CD4-positive, alpha-beta memory T cell (primary cell): ENCODE measurements at regions of chr19 and their contacts with region 1.

Region 1: GRCh38 chr19:5790573-5791520 is at the start of gene DUS3L:
- DNase-seq: peak; percentile 92 to 98 (median 97)
- H3K4me3 ChIP-seq: peak within 1 kb of the TSS; percentile 62 to 93
- H3K4me3 Mint-ChIP-seq: peak within 1 kb of the TSS; percentile 96 to 100 (median 99)
- H3K27ac ChIP-seq: peak within 1 kb of the TSS; percentile 97
- H3K27ac Mint-ChIP-seq: peak within 1 kb of the TSS; percentile 94 to 100 (median 100)
- H3K4me1 ChIP-seq: peaks cover 14% of the 10 kb centered on the region
- H3K4me1 Mint-ChIP-seq: peaks cover 11 to 24% (median 12%) of the 10 kb centered on the region in 4 donors
- H3K27me3 ChIP-seq: no peaks in the 10 kb centered on the region
- H3K27me3 Mint-ChIP-seq: peaks cover 0 to 2% of the 10 kb centered on the region in 2 donors
- total RNA-seq, gene DUS3L: 58.7 to 72.9 TPM

Region 2: GRCh38 chr19:5680437-5681368 is 110.1 kb before region 1 on chr19 and contains the starts of genes HSD11B1L and MICOS13:
- CTCF ChIA-PET with region 1: no interaction called
- POLR2A ChIA-PET with region 1: no interaction called
- intact Hi-C with region 1: loop called (anchors 1 kb)
- DNase-seq: peak; percentile 99 to 100 (median 99)
- H3K4me3 ChIP-seq: peak within 1 kb of the TSS; percentile 62 to 96
- H3K4me3 Mint-ChIP-seq: peak within 1 kb of the TSS; percentile 87 to 98 (median 93)
- H3K27ac ChIP-seq: peak within 1 kb of the TSS; percentile 87
- H3K27ac Mint-ChIP-seq: peak within 1 kb of the TSS; percentile 94 to 100 (median 99)
- H3K4me1 ChIP-seq: peaks cover 21% of the 10 kb centered on the region
- H3K4me1 Mint-ChIP-seq: peaks cover 18 to 41% (median 26%) of the 10 kb centered on the region in 4 donors
- H3K27me3 ChIP-seq: no peaks in the 10 kb centered on the region
- H3K27me3 Mint-ChIP-seq: no peaks in the 10 kb centered on the region
- total RNA-seq, gene HSD11B1L: 3.5 to 4.8 TPM
- total RNA-seq, gene MICOS13: 40.5 to 41.1 TPM

Region 3: GRCh38 chr19:5719961-5720790 is 70.7 kb before region 1 on chr19 and contains the starts of genes CATSPERD and LONP1:
- CTCF ChIA-PET with region 1: interaction called, 9 read pairs
- POLR2A ChIA-PET with region 1: interaction called, 11 read pairs
- intact Hi-C with region 1: loop called (anchors 1 kb)
- DNase-seq: peak; percentile 98 to 99 (median 99)
- H3K4me3 ChIP-seq: peak within 1 kb of the TSS; percentile 87 to 92
- H3K4me3 Mint-ChIP-seq: peak within 1 kb of the TSS; percentile 90 to 97 (median 90)
- H3K27ac ChIP-seq: peak within 1 kb of the TSS; percentile 89
- H3K27ac Mint-ChIP-seq: peak within 1 kb of the TSS; percentile 94 to 99 (median 97)
- H3K4me1 ChIP-seq: peaks cover 23% of the 10 kb centered on the region
- H3K4me1 Mint-ChIP-seq: peaks cover 20 to 37% (median 27%) of the 10 kb centered on the region in 4 donors
- H3K27me3 ChIP-seq: no peaks in the 10 kb centered on the region
- H3K27me3 Mint-ChIP-seq: peaks cover 0 to 6% of the 10 kb centered on the region in 2 donors
- total RNA-seq, gene CATSPERD: not detected
- total RNA-seq, gene LONP1: 59.6 to 64.7 TPM

Region 4: DNA sequence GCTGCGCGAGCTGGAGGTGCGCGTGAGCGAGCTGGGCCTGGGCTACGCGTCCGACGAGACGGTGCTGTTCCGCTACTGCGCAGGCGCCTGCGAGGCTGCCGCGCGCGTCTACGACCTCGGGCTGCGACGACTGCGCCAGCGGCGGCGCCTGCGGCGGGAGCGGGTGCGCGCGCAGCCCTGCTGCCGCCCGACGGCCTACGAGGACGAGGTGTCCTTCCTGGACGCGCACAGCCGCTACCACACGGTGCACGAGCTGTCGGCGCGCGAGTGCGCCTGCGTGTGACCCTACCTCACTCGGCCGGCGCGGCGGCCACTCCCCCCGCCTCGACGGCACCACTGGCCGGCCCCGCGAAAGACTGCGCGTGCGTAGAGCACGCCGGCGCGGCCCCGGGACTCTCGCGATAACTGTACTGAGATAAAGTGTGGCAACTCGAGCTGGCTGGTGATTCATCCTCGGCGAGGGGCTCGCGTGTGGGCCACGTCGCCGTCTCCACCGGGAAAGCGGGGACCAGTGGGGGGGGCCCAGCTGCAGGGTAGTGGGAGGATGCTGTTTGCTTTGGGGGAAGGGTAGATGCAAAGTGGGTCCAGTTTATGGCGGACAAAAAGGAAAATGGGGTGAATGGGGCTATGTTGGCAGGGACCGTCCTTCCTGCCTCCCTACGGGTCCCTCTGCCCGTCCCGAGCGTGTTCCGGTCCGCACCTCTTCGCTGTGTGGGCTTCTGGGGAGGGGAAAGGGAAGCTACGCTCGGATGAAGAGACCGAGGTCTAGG is 37.2 kb after region 1 on chr19:
- CTCF ChIA-PET with region 1: no interaction called
- POLR2A ChIA-PET with region 1: interaction called, 23 read pairs
- intact Hi-C with region 1: loop called (anchors 1 kb)
- DNase-seq: peak; percentile 91 to 96 (median 92)
- H3K4me3 ChIP-seq: peak overlapping the region; percentile 68 to 73
- H3K4me3 Mint-ChIP-seq: peak overlapping the region; percentile 92 to 99 (median 96)
- H3K27ac ChIP-seq: peak overlapping the region; percentile 49
- H3K27ac Mint-ChIP-seq: peak overlapping the region; percentile 95 to 97 (median 95)
- H3K4me1 ChIP-seq: peaks cover 22% of the 10 kb centered on the region
- H3K4me1 Mint-ChIP-seq: peaks cover 3 to 17% (median 10%) of the 10 kb centered on the region in 4 donors
- H3K27me3 ChIP-seq: no peaks in the 10 kb centered on the region
- H3K27me3 Mint-ChIP-seq: peaks cover 0 to 3% of the 10 kb centered on the region in 2 donors

Region 5: GRCh38 chr19:5839065-5840017 is 48.5 kb after region 1 on chr19 and contains the start of gene FUT6:
- CTCF ChIA-PET with region 1: no interaction called
- POLR2A ChIA-PET with region 1: no interaction called
- intact Hi-C with region 1: no loop called
- DNase-seq: no peak
- H3K4me3 ChIP-seq: no peak within 1 kb of the TSS
- H3K4me3 Mint-ChIP-seq: no peak within 1 kb of the TSS
- H3K27ac ChIP-seq: no peak within 1 kb of the TSS
- H3K27ac Mint-ChIP-seq: no peak within 1 kb of the TSS
- H3K4me1 ChIP-seq: no peaks in the 10 kb centered on the region
- H3K4me1 Mint-ChIP-seq: peaks cover 0 to 7% (median under 1%) of the 10 kb centered on the region in 4 donors
- H3K27me3 ChIP-seq: no peaks in the 10 kb centered on the region
- H3K27me3 Mint-ChIP-seq: peaks cover 2 to 6% of the 10 kb centered on the region in 2 donors
- total RNA-seq, gene FUT6: not detected

Region 6: GRCh38 chr19:6110360-6110977 is 319.6 kb after region 1 on chr19 and contains the start of gene RFX2:
- CTCF ChIA-PET with region 1: no interaction called
- POLR2A ChIA-PET with region 1: no interaction called
- intact Hi-C with region 1: loop called (anchors 2 kb)
- DNase-seq: peak; percentile 99 to 100 (median 99)
- H3K4me3 ChIP-seq: peak within 1 kb of the TSS; percentile 52 to 55
- H3K4me3 Mint-ChIP-seq: peak within 1 kb of the TSS; percentile 90 to 97 (median 94)
- H3K27ac ChIP-seq: peak within 1 kb of the TSS; percentile 43
- H3K27ac Mint-ChIP-seq: peak within 1 kb of the TSS; percentile 93 to 97 (median 95)
- H3K4me1 ChIP-seq: peaks cover 27% of the 10 kb centered on the region
- H3K4me1 Mint-ChIP-seq: peaks cover 11 to 26% (median 23%) of the 10 kb centered on the region in 4 donors
- H3K27me3 ChIP-seq: peaks cover 4% of the 10 kb centered on the region
- H3K27me3 Mint-ChIP-seq: peaks cover 2 to 7% of the 10 kb centered on the region in 2 donors
- total RNA-seq, gene RFX2: 5.6 to 6.7 TPM